AG04450 (cell line): ENCODE measurements at regions of chr11 and their contacts with region 1.

Region 1: DNA sequence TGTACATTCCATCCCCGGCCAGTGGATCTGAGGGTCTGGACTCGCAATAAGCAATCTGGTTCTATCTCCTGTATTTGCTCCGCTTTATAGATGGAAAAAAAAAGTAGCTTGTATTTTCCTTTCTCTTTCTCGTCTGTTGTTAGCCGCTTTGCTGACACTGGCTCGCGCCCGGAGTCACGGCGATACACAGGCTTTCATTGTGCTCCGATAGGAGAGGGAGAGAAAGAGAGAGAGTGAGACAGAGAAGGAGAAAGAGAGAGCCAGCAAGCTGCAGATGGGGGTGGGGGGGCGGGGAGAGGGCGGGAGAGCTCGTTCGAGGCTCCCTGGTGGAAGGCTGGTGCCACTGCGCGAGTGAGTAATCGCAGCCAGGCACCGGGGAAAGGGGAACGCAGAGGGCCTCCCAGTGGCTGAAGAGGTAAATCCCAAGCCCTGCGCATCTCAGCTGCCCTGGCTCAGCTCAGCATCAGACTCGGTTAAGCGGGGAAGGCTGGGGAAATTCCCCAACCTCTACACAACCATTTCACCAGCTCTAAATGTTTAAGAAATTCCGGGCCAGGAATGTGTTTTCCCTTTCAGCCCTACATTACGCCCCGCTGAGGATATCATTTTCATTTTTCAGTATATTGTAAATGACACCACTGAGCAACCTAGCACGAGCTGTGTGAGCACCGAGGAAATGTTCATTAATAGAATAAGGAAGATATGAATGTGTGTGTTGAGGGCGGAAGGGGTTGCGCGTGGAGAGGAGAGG is at the start of gene MAML2:
- DNase-seq: peak; percentile 89
- H3K4me3 ChIP-seq: peak within 1 kb of the TSS; percentile 81
- H3K27ac ChIP-seq: peak within 1 kb of the TSS; percentile 40
- H3K27me3 ChIP-seq: no peaks in the 10 kb centered on the region
- CTCF ChIP-seq: peak; percentile 93
- polyA plus RNA-seq, gene MAML2: 23.0 TPM in 2 replicates

Region 2: GRCh38 chr11:95698676-95699557 is 644.2 kb before region 1 on chr11:
- CTCF ChIA-PET with region 1: no interaction called
- POLR2A ChIA-PET with region 1: no interaction called
- DNase-seq: no peak
- H3K4me3 ChIP-seq: no peak overlapping the region
- H3K27ac ChIP-seq: no peak overlapping the region
- H3K27me3 ChIP-seq: no peaks in the 10 kb centered on the region
- CTCF ChIP-seq: no peak

Region 3: GRCh38 chr11:95968585-95968984 is 374.6 kb before region 1 on chr11:
- CTCF ChIA-PET with region 1: interaction called, 12 read pairs
- POLR2A ChIA-PET with region 1: no interaction called
- DNase-seq: no peak
- H3K4me3 ChIP-seq: no peak overlapping the region
- H3K27ac ChIP-seq: no peak overlapping the region
- H3K27me3 ChIP-seq: no peaks in the 10 kb centered on the region
- CTCF ChIP-seq: peak; percentile 45; the same call in 1 of the 2 replicates

Region 4: GRCh38 chr11:96091476-96091875 is 251.7 kb before region 1 on chr11:
- CTCF ChIA-PET with region 1: interaction called, 18 read pairs
- POLR2A ChIA-PET with region 1: no interaction called
- DNase-seq: no peak
- H3K4me3 ChIP-seq: no peak overlapping the region
- H3K27ac ChIP-seq: no peak overlapping the region
- H3K27me3 ChIP-seq: no peaks in the 10 kb centered on the region
- CTCF ChIP-seq: no peak

Region 5: DNA sequence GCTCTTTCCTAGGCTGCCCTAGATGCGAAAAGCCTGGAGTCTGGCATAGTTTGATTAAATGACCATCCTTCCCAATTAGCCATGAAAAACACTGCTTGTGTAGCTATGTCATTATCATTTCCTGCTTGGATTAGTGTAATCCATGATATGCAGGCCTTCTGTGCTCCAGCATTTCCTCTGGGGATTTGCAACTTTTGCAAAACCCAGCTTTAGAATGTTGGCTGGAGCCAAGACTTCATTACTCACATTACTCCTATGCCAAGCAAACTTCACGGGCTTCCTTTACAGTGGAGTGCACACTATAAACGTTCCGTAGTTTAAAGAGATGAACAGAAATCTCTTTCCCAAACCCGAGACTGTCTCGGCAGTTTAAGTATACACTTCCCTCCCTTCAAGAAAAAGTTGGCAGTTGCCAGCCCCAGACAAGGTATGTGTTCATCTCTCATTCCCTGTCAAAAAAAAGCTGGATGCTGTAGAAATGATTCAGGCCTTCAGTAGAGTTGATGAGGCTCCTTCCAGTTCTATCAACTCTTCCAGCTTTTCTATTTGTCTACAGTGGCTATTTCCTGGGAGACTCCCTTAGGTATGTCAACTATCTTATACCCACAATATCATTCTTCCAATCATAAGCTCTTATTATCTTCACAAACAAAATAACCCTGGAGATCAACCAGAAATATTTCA is 180.2 kb before region 1 on chr11:
- CTCF ChIA-PET with region 1: interaction called, 43 read pairs
- POLR2A ChIA-PET with region 1: interaction called, 6 read pairs
- DNase-seq: peak; percentile 76
- H3K4me3 ChIP-seq: peak overlapping the region; percentile 10; the same call in 1 of the 2 replicates
- H3K27ac ChIP-seq: peak overlapping the region; percentile 87
- H3K27me3 ChIP-seq: no peaks in the 10 kb centered on the region
- CTCF ChIP-seq: no peak

Region 6: DNA sequence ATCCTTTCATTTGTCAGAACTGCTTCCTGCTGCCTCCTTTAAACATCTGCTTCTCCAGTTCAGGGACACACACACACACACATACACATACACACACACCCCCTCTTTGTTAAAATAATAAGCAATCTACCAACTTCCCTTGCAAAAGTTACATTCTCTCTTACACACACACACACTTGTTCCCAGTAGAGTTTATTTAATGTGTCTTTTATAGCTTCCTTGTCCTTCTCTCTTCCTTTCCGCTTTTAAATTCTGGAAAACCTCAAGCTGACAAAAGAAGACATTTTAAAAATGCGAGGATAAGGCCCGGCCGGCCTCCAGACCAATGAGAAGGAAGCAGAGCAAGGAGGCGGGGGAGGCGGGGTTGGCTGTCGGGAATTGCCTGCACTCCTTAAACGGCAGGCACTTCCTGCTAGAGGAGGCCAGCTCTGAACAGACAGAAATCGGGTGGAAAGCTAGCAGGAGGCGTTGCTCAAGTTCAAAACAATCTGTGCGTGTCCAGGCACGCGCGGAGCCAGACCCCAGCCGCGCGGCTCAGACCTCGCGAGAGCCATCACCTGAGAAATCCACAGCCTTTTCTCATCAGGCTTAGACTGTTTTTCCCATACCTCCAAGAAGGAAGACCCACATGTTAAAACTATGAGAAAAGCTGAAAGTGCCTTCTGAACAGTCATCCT is 100.0 kb before region 1 on chr11:
- CTCF ChIA-PET with region 1: interaction called, 40 read pairs
- POLR2A ChIA-PET with region 1: interaction called, 7 read pairs
- DNase-seq: peak; percentile 96
- H3K4me3 ChIP-seq: peak overlapping the region; percentile 52
- H3K27ac ChIP-seq: peak overlapping the region; percentile 80
- H3K27me3 ChIP-seq: no peaks in the 10 kb centered on the region
- CTCF ChIP-seq: no peak

Region 7: DNA sequence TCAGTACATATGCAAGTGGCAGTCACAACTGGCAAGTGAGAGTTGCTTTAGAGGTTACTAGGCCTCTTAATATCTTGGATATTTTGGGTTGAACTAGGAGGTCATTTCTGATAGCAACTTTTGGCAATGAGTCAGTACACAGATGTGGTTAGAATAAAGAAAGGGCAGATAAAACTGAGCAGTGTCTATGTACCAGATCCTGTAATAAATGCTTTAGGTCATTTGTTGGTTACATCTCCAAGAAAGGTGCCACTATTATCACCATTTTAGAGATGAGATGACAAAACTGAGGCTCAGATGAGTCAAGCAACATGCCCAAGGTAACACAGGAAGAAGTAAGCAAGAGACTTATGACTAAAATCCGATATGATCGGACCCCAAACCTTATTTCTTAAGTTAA is 25.2 kb before region 1 on chr11:
- CTCF ChIA-PET with region 1: interaction called, 63 read pairs
- POLR2A ChIA-PET with region 1: no interaction called
- DNase-seq: no peak
- H3K4me3 ChIP-seq: no peak overlapping the region
- H3K27ac ChIP-seq: no peak overlapping the region
- H3K27me3 ChIP-seq: no peaks in the 10 kb centered on the region
- CTCF ChIP-seq: no peak

Region 8: GRCh38 chr11:96389720-96390487 is 46.8 kb after region 1 on chr11 and contains the starts of genes CCDC82 and JRKL:
- CTCF ChIA-PET with region 1: interaction called, 14 read pairs
- POLR2A ChIA-PET with region 1: interaction called, 5 read pairs
- DNase-seq: peak; percentile 87
- H3K4me3 ChIP-seq: peak within 1 kb of the TSS; percentile 91
- H3K27ac ChIP-seq: peak within 1 kb of the TSS; percentile 91
- H3K27me3 ChIP-seq: no peaks in the 10 kb centered on the region
- CTCF ChIP-seq: no peak
- polyA plus RNA-seq, gene CCDC82: 11.9 and 20.4 TPM in 2 replicates
- polyA plus RNA-seq, gene JRKL: 8.1 and 11.2 TPM in 2 replicates

Region 9: DNA sequence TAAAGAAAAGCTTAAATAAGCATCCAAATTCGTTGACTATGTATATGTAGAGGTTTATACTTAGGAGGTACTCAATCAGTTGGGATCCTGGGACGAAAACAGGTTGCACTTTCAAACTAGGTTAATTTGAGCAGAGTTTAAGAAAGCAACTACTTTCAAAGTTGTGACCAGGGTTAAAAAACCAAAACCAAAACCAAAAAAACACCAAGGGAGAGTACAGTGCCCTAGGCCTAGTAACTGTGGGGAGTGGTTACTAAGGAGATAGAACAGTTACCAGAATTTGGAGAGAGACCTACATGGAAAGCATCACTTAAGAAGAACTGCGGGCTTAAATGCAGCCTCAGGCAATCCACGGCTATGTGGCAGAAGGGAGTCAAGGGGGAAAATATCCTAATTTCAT is 195.0 kb after region 1 on chr11:
- CTCF ChIA-PET with region 1: no interaction called
- POLR2A ChIA-PET with region 1: no interaction called
- DNase-seq: no peak
- H3K4me3 ChIP-seq: no peak overlapping the region
- H3K27ac ChIP-seq: no peak overlapping the region
- H3K27me3 ChIP-seq: no peaks in the 10 kb centered on the region
- CTCF ChIP-seq: no peak

Region 10: DNA sequence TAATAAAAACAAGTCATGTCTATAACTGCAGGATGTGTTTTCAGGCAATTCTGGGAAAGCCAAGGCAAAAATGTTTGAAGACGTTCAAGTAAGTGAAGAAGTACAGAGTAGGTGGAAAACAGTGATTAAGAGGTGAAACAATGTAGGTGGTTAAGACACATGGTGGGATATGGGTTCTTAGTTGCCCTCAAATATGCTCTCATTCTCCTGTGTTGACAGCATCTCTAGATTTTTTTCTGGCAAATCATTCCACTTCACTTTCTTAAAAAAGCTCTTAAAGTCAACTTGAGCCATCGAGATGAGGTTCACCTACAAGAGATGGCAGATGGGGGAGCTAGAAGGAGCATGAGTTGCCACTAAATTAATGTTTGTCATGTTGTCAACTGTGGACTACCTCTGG is 1636.6 kb after region 1 on chr11:
- CTCF ChIA-PET with region 1: no interaction called
- POLR2A ChIA-PET with region 1: no interaction called
- DNase-seq: no peak
- H3K4me3 ChIP-seq: no peak overlapping the region
- H3K27ac ChIP-seq: no peak overlapping the region
- H3K27me3 ChIP-seq: no peaks in the 10 kb centered on the region
- CTCF ChIP-seq: no peak